B cell (primary cell): ENCODE measurements at regions of chr14 and their contacts with region 1.

Region 1: GRCh38 chr14:100239840-100240724 is 1.1 kb downstream of the YY1 start:
- DNase-seq: peak; percentile 93
- ATAC-seq: peak; percentile 52
- H3K4me3 ChIP-seq: peak overlapping the region; percentile 72 to 91 (median 87)
- H3K4me3 Mint-ChIP-seq: peak overlapping the region; percentile 87
- H3K27ac ChIP-seq: peak overlapping the region; percentile 55 to 97
- H3K27ac Mint-ChIP-seq: peak overlapping the region; percentile 95
- H3K4me1 ChIP-seq: peaks cover 38 to 47% of the 10 kb centered on the region in 2 donors
- H3K4me1 Mint-ChIP-seq: peaks cover 55% of the 10 kb centered on the region
- H3K27me3 ChIP-seq: no peaks in the 10 kb centered on the region
- H3K27me3 Mint-ChIP-seq: no peaks in the 10 kb centered on the region
- CTCF ChIP-seq: peak; percentile 67

Region 2: DNA sequence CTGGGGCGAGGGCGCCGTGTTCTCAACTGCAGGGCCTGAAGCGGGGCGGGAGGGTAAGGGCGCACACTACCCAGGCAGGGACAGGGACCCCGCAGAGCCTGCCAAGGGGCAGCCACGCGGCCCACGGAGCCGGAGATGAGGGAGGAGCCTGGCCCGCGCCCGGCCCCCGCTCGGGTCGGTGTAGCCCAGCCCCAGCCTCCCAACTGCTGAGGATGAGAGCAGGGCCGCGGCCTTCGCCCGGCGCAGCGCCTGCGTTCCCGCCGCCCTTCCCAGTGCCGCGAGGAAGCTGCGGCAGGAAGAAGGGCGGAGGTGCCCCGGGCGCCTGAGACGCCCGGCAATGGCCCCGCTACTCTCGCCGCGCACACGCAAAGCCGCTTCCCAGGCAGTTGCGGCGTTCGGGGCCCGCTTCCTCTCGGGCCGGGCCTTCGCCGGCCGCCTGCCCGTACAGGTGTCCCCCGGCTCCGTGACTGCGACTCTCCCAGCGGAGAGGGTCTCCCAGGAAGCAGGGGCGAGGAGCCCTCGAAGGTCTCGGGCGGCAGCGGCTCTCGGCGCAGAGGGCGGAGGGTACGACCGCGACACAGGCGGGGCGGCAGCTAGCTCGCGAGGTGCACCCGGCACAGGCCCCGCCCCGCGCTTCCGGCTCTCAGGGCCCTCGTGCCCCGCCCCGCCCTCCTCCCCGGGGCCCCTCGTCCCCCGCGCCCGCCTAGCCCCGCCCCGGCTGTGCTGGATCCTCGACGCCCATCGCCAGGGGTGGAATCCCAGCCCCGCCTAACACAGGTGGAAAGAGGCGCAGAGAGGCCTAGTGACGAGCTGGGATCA is 25.9 kb before region 1 on chr14:
- CTCF ChIA-PET with region 1: interaction called, 6 read pairs
- POLR2A ChIA-PET with region 1: no interaction called
- intact Hi-C with region 1: loop called (anchors 1 kb)
- DNase-seq: peak; percentile 92
- ATAC-seq: peak; percentile 96
- H3K4me3 ChIP-seq: peak overlapping the region; percentile 17 to 91 (median 90)
- H3K4me3 Mint-ChIP-seq: peak overlapping the region; percentile 87
- H3K27ac ChIP-seq: peak overlapping the region; percentile 77 to 78
- H3K27ac Mint-ChIP-seq: peak overlapping the region; percentile 89
- H3K4me1 ChIP-seq: peaks cover 12 to 15% of the 10 kb centered on the region in 2 donors
- H3K4me1 Mint-ChIP-seq: peaks cover 16% of the 10 kb centered on the region
- H3K27me3 ChIP-seq: no peaks in the 10 kb centered on the region
- H3K27me3 Mint-ChIP-seq: no peaks in the 10 kb centered on the region
- CTCF ChIP-seq: no peak

Region 3: DNA sequence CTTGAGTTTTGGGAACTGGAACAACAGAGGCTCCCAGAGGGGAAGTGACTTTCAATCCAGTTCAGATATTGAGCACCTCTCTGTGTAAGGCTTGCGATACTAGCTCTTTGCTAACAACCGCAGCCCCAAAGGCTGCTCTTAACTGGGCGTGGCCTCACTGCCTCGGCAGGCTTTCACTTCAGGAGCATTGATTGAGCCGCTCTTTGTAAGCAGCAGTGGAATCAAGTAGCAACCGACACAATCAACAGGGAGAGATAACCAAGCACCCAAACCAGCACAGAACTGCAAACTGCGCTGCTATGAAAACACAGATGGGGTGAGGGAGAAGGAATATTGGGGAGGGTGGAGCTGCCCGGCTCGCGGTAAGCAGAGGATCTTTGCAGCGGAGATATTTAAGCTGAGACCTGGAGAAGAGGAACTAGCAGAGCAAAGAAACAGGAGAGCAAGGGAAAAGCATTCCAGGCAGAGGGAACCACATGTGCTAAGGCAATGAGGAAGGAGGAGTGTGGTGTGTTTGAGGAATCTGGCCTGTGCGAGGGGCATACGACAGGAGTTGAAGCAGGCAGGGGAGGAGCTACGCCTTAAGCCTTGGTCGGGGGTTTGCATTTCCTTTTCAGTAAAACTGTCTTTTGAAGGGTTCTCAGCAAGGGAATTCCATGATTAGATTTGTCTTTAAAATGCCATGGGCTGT is 18.4 kb before region 1 on chr14:
- CTCF ChIA-PET with region 1: interaction called, 31 read pairs
- POLR2A ChIA-PET with region 1: interaction called, 8 read pairs
- intact Hi-C with region 1: loop called (anchors 1 kb)
- DNase-seq: peak; percentile 73
- ATAC-seq: peak; percentile 98
- H3K4me3 ChIP-seq: peak overlapping the region; percentile 64 to 92 (median 78)
- H3K4me3 Mint-ChIP-seq: no peak overlapping the region
- H3K27ac ChIP-seq: peak overlapping the region; percentile 59 to 65
- H3K27ac Mint-ChIP-seq: no peak overlapping the region
- H3K4me1 ChIP-seq: peaks cover 28 to 38% of the 10 kb centered on the region in 2 donors
- H3K4me1 Mint-ChIP-seq: peaks cover 19% of the 10 kb centered on the region
- H3K27me3 ChIP-seq: no peaks in the 10 kb centered on the region
- H3K27me3 Mint-ChIP-seq: no peaks in the 10 kb centered on the region
- CTCF ChIP-seq: no peak

Region 4: GRCh38 chr14:100256339-100256895 is 16.3 kb after region 1 on chr14:
- CTCF ChIA-PET with region 1: interaction called, 6 read pairs
- POLR2A ChIA-PET with region 1: no interaction called
- intact Hi-C with region 1: loop called (anchors 2 kb)
- DNase-seq: peak; percentile 63
- ATAC-seq: peak; percentile 72
- H3K4me3 ChIP-seq: no peak overlapping the region
- H3K4me3 Mint-ChIP-seq: peak overlapping the region; percentile 62
- H3K27ac ChIP-seq: peak overlapping the region; percentile 31 to 34
- H3K27ac Mint-ChIP-seq: peak overlapping the region; percentile 72
- H3K4me1 ChIP-seq: peaks cover 61% of the 10 kb centered on the region in 2 donors
- H3K4me1 Mint-ChIP-seq: peaks cover 69% of the 10 kb centered on the region
- H3K27me3 ChIP-seq: no peaks in the 10 kb centered on the region
- H3K27me3 Mint-ChIP-seq: no peaks in the 10 kb centered on the region
- CTCF ChIP-seq: no peak

Region 5: GRCh38 chr14:100306420-100307219 is 66.5 kb after region 1 on chr14 and contains the start of gene SLC25A29:
- CTCF ChIA-PET with region 1: interaction called, 3 read pairs
- POLR2A ChIA-PET with region 1: no interaction called
- intact Hi-C with region 1: loop called (anchors 1 kb)
- DNase-seq: peak; percentile 84
- ATAC-seq: peak; percentile 94
- H3K4me3 ChIP-seq: peak within 1 kb of the TSS in 4 of 5 experiments; percentile 70 to 81 (median 80)
- H3K4me3 Mint-ChIP-seq: peak within 1 kb of the TSS; percentile 94
- H3K27ac ChIP-seq: peak within 1 kb of the TSS in 1 of 2 donors; percentile 46
- H3K27ac Mint-ChIP-seq: peak within 1 kb of the TSS; percentile 83
- H3K4me1 ChIP-seq: peaks cover 20 to 32% of the 10 kb centered on the region in 2 donors
- H3K4me1 Mint-ChIP-seq: peaks cover 21% of the 10 kb centered on the region
- H3K27me3 ChIP-seq: peaks cover 0 to 3% (median 0%) of the 10 kb centered on the region in 4 experiments
- H3K27me3 Mint-ChIP-seq: no peaks in the 10 kb centered on the region
- CTCF ChIP-seq: no peak
- total RNA-seq, gene SLC25A29: 99.9 and 108 TPM in 2 replicates